GM12878 (cell line): ENCODE measurements at regions of chr11 and their contacts with region 1.

Region 1: DNA sequence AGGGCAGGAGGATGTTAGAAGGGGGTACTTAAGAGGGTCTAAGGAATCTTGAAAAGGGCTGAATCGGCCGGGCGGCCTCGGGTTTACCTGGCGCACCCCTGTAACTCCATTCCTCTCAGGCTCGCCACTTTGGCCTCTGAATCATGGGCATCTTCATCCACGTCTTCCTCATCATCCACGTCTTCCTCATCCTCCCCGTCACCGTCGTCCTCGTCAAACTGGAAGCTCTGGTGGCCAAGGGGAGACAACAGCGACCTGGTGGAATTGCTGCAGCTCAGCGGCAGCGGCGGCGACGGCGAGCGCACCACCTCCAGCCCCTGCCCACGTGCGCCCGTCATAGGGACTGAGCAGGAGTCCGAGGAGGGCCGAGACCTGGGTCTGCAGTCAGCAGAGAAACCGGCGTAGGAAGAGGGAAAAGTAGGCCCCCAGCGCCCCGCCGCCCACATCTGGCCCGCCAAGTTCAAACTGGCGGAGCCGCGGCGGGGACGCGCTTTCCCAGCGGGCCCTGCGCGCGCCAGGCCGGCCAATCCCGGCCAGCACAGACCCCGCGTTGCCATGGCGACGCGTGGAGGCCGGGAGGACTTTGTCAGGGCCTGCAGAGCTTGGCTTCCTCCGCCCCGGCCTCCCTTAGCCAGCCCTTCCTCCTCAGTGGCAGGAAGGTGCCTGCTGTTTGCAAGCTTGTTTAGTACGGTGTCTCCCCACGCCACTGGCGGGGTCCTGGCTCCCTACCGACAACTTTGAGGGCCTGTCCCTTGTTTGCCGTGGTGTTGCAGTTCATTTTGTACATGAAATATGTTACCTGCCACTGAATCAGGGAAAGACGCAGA is at the start of gene CCDC34:
- DNase-seq: peak; percentile 48
- ATAC-seq: peak; percentile 99
- H3K4me3 ChIP-seq: peak within 1 kb of the TSS; percentile 81
- H3K27ac ChIP-seq: peak within 1 kb of the TSS; percentile 69
- H3K4me1 ChIP-seq: peaks cover 3% of the 10 kb centered on the region; the same call in 1 of the 2 replicates
- H3K27me3 ChIP-seq: no peaks in the 10 kb centered on the region
- CTCF ChIP-seq: no peak
- EP300 ChIP-seq: no peak
- POLR2A ChIP-seq: peak; percentile 78
- RAD21 ChIP-seq: no peak
- polyA plus RNA-seq, gene CCDC34: 6.2 to 13.4 TPM

Region 2: DNA sequence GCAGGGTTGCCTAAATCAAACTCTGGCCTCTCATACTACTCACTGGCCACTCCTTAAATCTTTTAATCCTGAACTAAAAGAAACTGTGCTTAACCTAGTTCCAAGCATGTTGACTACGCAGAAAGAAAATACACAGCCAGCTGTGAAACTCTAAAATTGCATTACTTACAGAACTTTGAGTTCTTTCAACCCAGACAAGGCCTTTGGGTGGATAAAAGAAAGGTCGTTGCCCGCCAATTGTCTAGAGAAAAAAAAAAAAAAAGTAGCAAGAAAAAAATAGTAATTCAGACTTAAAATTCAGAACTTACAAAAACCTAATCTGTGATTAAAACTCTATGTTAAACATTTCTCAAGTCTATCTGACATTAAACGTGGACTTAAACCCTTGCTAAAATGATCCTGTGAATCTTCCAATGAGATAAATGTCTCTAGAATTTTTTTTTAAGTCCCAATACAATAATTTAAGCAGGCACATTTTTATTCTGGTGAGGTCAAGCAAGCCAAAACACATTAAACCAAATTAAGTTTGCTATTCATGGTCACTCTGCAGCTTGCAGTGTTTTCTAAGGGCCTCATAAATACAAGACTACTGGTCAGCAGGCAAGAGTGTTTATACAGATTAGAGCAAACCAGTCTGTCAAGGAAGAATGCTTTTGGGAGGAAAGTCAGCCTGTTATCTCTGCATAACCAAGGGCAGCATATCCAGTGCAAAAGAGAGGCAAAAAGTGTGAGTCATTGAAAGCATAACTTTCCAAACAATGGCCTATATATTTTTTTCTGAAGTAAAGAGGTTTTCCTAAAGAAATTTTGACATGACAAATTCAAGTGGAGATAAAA is 29.5 kb after region 1 on chr11:
- CTCF ChIA-PET with region 1: no interaction called
- POLR2A ChIA-PET with region 1: no interaction called
- RAD21 ChIA-PET with region 1: no interaction called
- SMC1A ChIA-PET with region 1: no interaction called
- in situ Hi-C with region 1: no loop called
- intact Hi-C with region 1: no loop called
- DNase-seq: no peak
- ATAC-seq: no peak
- H3K4me3 ChIP-seq: no peak overlapping the region
- H3K27ac ChIP-seq: no peak overlapping the region
- H3K4me1 ChIP-seq: no peaks in the 10 kb centered on the region
- H3K27me3 ChIP-seq: no peaks in the 10 kb centered on the region
- CTCF ChIP-seq: no peak
- EP300 ChIP-seq: no peak
- POLR2A ChIP-seq: no peak
- RAD21 ChIP-seq: no peak

Region 3: GRCh38 chr11:27497284-27497866 is 134.4 kb after region 1 on chr11:
- CTCF ChIA-PET with region 1: interaction called, 15 read pairs
- POLR2A ChIA-PET with region 1: interaction called, 3 read pairs
- RAD21 ChIA-PET with region 1: no interaction called
- SMC1A ChIA-PET with region 1: no interaction called
- in situ Hi-C with region 1: no loop called
- intact Hi-C with region 1: no loop called
- DNase-seq: no peak
- ATAC-seq: peak; percentile 86
- H3K4me3 ChIP-seq: no peak overlapping the region
- H3K27ac ChIP-seq: no peak overlapping the region
- H3K4me1 ChIP-seq: no peaks in the 10 kb centered on the region
- H3K27me3 ChIP-seq: no peaks in the 10 kb centered on the region
- CTCF ChIP-seq: peak; percentile 28 to 51 (median 30); a peak in 4 of 6 replicates
- EP300 ChIP-seq: no peak
- POLR2A ChIP-seq: no peak
- RAD21 ChIP-seq: peak; percentile 41; the same call in 1 of the 2 replicates

Region 4: GRCh38 chr11:27514558-27514957 is 151.6 kb after region 1 on chr11:
- CTCF ChIA-PET with region 1: no interaction called
- POLR2A ChIA-PET with region 1: no interaction called
- RAD21 ChIA-PET with region 1: no interaction called
- SMC1A ChIA-PET with region 1: no interaction called
- in situ Hi-C with region 1: no loop called
- intact Hi-C with region 1: no loop called
- DNase-seq: no peak
- ATAC-seq: no peak
- H3K4me3 ChIP-seq: no peak overlapping the region
- H3K27ac ChIP-seq: no peak overlapping the region
- H3K4me1 ChIP-seq: no peaks in the 10 kb centered on the region
- H3K27me3 ChIP-seq: no peaks in the 10 kb centered on the region; a peak in 1 of 4 replicates
- CTCF ChIP-seq: no peak
- EP300 ChIP-seq: no peak
- POLR2A ChIP-seq: no peak
- RAD21 ChIP-seq: no peak